ENCODE measurements at regions of chr1 and their contacts with region 1.

Region 1: DNA sequence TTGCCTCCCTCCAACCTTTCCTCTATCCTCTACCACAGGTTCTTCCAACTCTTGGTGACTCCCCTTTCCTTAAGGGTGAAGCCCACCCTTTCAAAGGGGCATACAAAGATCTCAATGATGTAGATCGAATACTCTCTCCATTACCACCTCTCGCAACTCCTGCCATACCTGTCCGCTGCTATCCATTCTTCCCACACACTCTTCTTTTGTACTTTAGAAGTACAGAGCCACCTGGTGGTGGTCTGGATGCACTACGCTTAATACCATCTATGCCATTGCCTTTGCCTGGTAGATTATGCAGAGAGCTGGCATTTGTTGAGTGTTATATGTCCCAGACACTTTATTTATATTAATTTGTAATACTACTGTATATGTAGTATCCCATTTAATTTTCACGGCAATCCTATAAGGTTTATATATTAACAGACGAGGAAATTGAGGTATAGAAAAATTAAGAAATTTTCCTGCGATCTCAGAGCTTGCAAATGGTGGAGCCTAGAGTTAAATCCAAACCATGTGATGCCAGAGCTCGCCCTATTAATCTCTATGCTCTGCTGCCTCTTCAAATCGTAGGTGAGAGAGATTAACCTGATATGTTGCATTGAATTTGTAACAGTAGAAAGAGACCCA is 22.9 kb downstream of the TSHB start:
- DNase-seq: peak in 2 of 5 donors; percentile 27 to 56
- ATAC-seq: peak in 3 of 4 donors; percentile 69 to 74 (median 71)
- H3K4me3 ChIP-seq: no peak overlapping the region
- H3K27ac ChIP-seq: no peak overlapping the region
- H3K4me1 ChIP-seq: no peaks in the 10 kb centered on the region
- H3K27me3 ChIP-seq: no peaks in the 10 kb centered on the region
- CTCF ChIP-seq: peak; percentile 68 to 92 (median 78)
- POLR2A ChIP-seq: no peak

Region 2: DNA sequence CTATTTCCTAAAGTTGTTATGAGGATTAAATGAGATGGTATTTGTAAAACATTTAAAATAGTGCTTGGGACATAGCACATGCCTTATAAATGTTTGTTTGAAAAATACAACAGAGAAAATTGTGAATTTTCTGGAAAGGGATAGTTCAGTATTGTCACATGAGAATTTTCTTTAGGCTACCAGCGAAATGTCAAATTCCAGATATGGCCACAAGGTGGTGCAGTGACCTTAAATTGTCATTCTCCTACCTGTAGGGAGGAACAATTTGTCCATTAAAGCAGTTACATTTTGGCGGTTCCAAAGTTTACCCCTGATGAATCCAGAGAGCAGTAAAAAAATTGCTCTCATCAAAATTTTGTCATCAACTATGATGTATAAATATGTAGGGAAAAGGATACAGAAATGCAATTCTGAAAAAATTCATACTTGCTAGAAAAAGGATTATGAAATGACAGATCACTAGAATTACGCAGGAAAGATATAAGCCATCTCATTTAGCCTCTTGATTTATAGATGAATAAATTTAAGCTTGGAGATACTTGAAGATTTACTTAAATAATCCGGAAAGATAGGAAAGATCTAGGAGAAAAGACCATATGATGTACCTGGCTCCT is 73.2 kb before region 1 on chr1:
- intact Hi-C with region 1: loop called in 9 of 10 experiments (anchors 1 to 5 kb)
- DNase-seq: peak in 4 of 5 donors; percentile 25 to 39 (median 38)
- ATAC-seq: peak in 1 of 4 donors; percentile 51
- H3K4me3 ChIP-seq: no peak overlapping the region
- H3K27ac ChIP-seq: no peak overlapping the region
- H3K4me1 ChIP-seq: no peaks in the 10 kb centered on the region
- H3K27me3 ChIP-seq: peaks cover 0 to 10% (median 0%) of the 10 kb centered on the region in 9 donors
- CTCF ChIP-seq: peak; percentile 73 to 90 (median 80)
- POLR2A ChIP-seq: no peak

Region 3: GRCh38 chr1:115107516-115108260 is 55.1 kb after region 1 on chr1:
- intact Hi-C with region 1: loop called in 4 of 10 experiments (anchors 1 to 10 kb)
- DNase-seq: no peak
- ATAC-seq: peak in 1 of 4 donors; percentile 48
- H3K4me3 ChIP-seq: no peak overlapping the region
- H3K27ac ChIP-seq: no peak overlapping the region
- H3K4me1 ChIP-seq: peaks cover 0 to 18% (median 0%) of the 10 kb centered on the region in 12 donors
- H3K27me3 ChIP-seq: no peaks in the 10 kb centered on the region
- CTCF ChIP-seq: no peak
- POLR2A ChIP-seq: no peak

Region 4: GRCh38 chr1:115112496-115113375 is 60.2 kb after region 1 on chr1:
- intact Hi-C with region 1: loop called in 4 of 10 experiments (anchors 1 to 10 kb)
- DNase-seq: peak in 2 of 5 donors; percentile 33 to 38
- ATAC-seq: peak in 2 of 4 donors; percentile 29 to 36
- H3K4me3 ChIP-seq: no peak overlapping the region
- H3K27ac ChIP-seq: no peak overlapping the region
- H3K4me1 ChIP-seq: peaks cover 0 to 15% (median 0%) of the 10 kb centered on the region in 12 donors
- H3K27me3 ChIP-seq: no peaks in the 10 kb centered on the region
- CTCF ChIP-seq: peak; percentile 87 to 95 (median 92)
- POLR2A ChIP-seq: no peak